Mammary epithelial cell (primary cell): ENCODE measurements at regions of chr5 and their contacts with region 1.

Region 1: DNA sequence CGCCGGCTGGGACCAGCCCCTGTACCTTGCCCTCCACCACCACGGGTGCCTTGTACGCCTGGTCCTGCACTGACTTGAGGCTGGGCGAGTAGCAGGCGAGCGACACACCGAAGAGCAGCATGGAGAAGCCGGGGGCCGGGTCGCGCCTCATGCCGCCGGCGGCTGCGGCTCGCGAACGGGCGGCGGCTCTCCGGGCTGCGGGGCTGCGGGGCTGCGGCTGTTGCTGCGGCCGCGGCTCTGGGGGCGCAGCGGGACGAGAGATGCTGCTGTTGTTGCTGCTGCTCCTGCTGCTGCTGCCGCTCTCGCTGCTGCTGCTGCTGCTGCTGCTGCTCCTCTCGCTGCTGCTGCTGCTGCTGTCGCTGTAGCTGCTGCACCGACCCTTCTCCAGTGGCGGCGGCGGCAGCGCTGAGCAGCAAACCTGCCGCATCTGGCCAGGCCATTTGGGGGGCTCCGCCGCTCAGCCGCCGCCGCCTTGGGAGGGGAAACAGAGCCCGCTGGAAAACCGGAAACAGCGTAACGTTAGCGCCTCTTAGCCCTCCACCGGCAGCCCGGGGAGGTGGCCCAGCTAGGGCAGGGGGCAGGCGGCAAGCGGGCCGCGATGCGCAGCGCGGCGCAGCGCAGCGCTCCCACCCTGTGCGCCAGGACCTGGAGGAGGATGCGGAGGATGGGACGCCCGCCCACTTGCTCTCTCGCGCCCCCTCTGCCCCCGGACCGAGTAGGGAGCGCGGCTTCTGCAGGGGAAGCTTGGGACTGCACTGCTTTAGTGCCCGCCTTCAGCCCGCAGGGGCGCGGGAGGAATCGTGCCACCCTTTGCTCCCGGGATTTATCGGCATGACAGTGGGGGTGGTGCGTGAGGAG is at the start of gene NRG2:
- DNase-seq: peak; percentile 43
- H3K4me3 ChIP-seq: peak within 1 kb of the TSS; percentile 62 to 68 (median 65)
- H3K27ac ChIP-seq: no peak within 1 kb of the TSS
- H3K4me1 ChIP-seq: peaks cover 29% of the 10 kb centered on the region
- H3K27me3 ChIP-seq: no peaks in the 10 kb centered on the region
- CTCF ChIP-seq: peak; percentile 29 to 49
- total RNA-seq, gene NRG2: 0.17 to 3.9 TPM

Region 2: GRCh38 chr5:139985733-139986132 is 57.1 kb before region 1 on chr5:
- CTCF ChIA-PET with region 1: no interaction called
- dilution Hi-C with region 1: no loop called
- in situ Hi-C with region 1: no loop called
- intact Hi-C with region 1: loop called (anchors 5 kb)
- DNase-seq: peak; percentile 98
- H3K4me3 ChIP-seq: peak overlapping the region in 1 of 3 experiments; percentile 1
- H3K27ac ChIP-seq: peak overlapping the region; percentile 92
- H3K4me1 ChIP-seq: peaks cover 44% of the 10 kb centered on the region
- H3K27me3 ChIP-seq: no peaks in the 10 kb centered on the region
- CTCF ChIP-seq: no peak